GM13977 (cell line): ENCODE measurements at regions of chr16 and their contacts with region 1.

Region 1: GRCh38 chr16:68503334-68503733 is 35.8 kb upstream of the ZFP90 start:
- DNase-seq: no peak
- CTCF ChIP-seq: no peak

Region 2: DNA sequence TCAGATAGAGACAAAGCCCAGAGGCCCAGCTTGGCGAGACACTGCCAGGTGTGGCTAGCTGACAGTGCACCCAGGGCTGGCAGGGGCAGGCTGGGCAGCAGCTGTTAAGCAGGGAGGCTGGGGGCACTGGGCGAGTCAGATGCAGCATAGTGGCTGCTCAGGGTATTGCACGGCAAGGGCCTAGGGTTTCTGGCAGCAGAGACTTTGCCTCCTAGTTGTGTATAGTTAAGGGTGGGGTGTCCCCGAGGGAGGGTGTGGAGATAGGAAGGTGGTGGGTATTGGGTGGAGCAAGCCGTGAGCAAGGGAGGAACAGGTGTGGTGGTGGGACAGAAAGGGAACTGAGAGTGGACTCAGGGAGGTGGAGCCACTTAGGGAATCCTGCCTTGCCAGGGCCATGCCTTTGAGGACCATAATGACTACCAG is 121.0 kb before region 1 on chr16:
- in situ Hi-C with region 1: loop called (anchors 10 kb)
- DNase-seq: peak; percentile 66
- CTCF ChIP-seq: peak; percentile 45

Region 3: GRCh38 chr16:68644715-68645493 is 141.6 kb after region 1 on chr16 and contains the start of gene CDH3:
- in situ Hi-C with region 1: no loop called
- DNase-seq: no peak
- CTCF ChIP-seq: no peak